Activated B cell treated with CpG ODN at 0.5 μM for 24 hours (primary cell): ENCODE measurements at regions of chr6 and their contacts with region 1.

Region 1: GRCh38 chr6:32933636-32934085 is 7.2 kb downstream of the HLA-DMB start:
- DNase-seq: peak; percentile 60
- ATAC-seq: peak; percentile 54
- H3K4me3 Mint-ChIP-seq: no peak overlapping the region
- H3K27ac Mint-ChIP-seq: peak overlapping the region; percentile 79
- H3K4me1 Mint-ChIP-seq: peaks cover 92% of the 10 kb centered on the region
- H3K27me3 Mint-ChIP-seq: no peaks in the 10 kb centered on the region
- CTCF ChIP-seq: peak; percentile 65

Region 2: DNA sequence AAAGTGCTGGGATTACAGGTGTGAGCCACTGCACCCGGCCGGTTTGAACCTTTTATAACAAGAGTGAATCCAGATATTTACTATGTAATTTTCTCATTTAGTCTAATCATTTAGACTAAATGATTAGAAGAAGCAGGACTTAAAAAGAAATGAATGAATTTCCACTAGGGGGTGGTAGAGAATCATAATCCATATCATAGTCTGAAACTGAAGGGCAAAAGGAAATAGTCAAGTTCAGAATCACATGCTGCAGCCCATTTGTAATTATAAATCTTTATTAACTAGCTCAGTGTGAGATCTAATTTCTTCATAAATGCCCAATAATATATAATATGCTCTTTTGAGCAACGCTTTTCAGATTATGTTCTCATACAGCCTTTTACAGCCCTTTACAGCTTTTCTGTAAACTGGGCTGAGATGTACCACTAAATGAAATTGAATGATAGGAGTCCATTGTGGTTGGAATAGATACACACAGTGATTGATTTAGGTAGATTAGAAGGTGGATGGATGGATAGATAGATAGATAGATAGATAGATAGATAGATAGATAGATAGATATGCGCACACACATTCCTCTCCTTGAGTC is 47.9 kb before region 1 on chr6:
- CTCF ChIA-PET with region 1: interaction called, 33 read pairs
- POLR2A ChIA-PET with region 1: interaction called, 9 read pairs
- intact Hi-C with region 1: no loop called
- DNase-seq: no peak
- ATAC-seq: peak; percentile 68
- H3K4me3 Mint-ChIP-seq: no peak overlapping the region
- H3K27ac Mint-ChIP-seq: no peak overlapping the region
- H3K4me1 Mint-ChIP-seq: peaks cover 27% of the 10 kb centered on the region
- H3K27me3 Mint-ChIP-seq: no peaks in the 10 kb centered on the region
- CTCF ChIP-seq: no peak

Region 3: DNA sequence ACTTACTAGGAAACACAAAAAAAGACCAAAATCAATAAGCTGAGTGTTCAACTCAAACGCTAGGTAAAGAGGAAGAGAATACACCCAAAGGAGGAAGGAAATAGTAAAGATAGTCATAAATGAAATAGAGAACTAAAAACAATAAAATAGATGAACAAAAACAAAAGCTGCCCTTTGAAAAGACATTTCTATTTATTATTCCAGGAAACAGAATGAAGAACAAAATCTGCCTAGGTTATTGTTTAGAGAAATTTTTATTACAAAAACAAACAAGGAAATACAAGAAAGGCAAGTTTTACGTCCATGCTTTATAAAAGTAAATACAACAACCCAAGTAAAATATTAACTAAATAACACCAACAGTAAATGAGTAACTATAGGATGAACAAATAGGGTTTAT is 12.9 kb before region 1 on chr6:
- CTCF ChIA-PET with region 1: interaction called, 27 read pairs
- POLR2A ChIA-PET with region 1: interaction called, 37 read pairs
- intact Hi-C with region 1: loop called (anchors 2 kb)
- DNase-seq: no peak
- ATAC-seq: peak; percentile 40
- H3K4me3 Mint-ChIP-seq: peak overlapping the region; percentile 67
- H3K27ac Mint-ChIP-seq: peak overlapping the region; percentile 81
- H3K4me1 Mint-ChIP-seq: peaks cover 73% of the 10 kb centered on the region
- H3K27me3 Mint-ChIP-seq: no peaks in the 10 kb centered on the region
- CTCF ChIP-seq: no peak

Region 4: DNA sequence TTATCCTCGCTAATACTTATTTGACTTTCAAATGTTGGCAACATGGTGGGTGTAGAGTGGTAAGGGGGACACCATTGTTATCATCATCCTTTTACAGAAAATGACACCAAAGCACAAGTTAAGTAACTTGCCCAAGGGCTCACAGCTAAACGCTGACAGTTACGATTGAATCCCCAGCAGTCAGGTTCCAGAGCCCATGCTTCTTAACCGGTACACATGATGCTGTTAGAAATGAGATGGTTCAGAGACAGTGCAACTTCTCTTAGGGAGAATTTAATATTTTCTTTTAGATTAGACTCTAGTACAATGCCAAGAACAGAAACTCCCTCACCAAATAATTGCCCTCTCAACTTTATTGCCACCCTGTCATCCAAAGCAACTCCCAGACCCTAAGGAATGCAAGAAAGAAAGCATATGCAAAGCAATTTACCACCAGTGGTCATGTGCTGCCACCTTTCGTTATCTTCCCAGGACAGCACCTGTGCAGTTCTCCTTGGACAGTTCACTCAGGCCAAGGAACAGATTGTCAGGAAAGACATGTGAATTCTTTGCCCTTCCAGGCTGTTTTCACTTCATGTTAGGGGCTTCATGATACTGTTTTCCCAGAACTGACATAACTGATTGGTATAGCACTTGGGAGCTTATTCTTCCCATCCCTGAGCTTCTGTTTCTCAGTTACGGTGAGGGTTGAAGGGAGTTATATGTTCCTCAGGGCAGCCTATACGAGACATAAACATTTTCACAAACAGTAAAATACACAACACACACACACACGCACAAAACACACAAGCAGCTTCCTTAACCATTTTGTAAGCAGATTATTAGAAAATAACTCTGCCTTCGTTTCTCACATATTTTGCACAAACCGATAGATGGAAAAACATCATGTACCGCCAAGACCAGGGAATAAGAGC is 14.1 kb after region 1 on chr6:
- CTCF ChIA-PET with region 1: interaction called, 99 read pairs
- POLR2A ChIA-PET with region 1: interaction called, 594 read pairs
- intact Hi-C with region 1: loop called (anchors 1 kb)
- DNase-seq: no peak
- ATAC-seq: no peak
- H3K4me3 Mint-ChIP-seq: peak overlapping the region; percentile 98
- H3K27ac Mint-ChIP-seq: peak overlapping the region; percentile 99
- H3K4me1 Mint-ChIP-seq: peaks cover 94% of the 10 kb centered on the region
- H3K27me3 Mint-ChIP-seq: no peaks in the 10 kb centered on the region
- CTCF ChIP-seq: no peak

Region 5: DNA sequence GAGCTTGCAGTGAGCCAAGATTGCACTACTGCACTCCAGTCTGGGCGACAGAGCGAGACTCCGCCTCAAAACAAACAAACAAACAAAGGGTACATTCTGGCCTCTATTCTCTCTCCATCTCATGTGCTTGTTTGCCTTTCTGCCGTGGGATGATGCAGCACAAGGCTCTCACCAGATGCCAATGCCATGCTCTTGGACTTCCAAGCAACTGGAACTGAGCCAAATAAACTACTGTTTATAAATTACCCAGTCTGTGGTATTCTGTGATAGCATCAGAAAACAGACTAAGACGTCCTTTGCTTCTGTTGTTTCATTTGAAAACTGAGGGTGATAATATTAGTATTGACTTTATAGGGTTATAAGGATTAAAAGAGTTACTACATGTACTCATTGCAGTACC is 31.1 kb after region 1 on chr6:
- CTCF ChIA-PET with region 1: interaction called, 151 read pairs
- POLR2A ChIA-PET with region 1: interaction called, 1,150 read pairs
- intact Hi-C with region 1: loop called (anchors 1 kb)
- DNase-seq: no peak
- ATAC-seq: no peak
- H3K4me3 Mint-ChIP-seq: no peak overlapping the region
- H3K27ac Mint-ChIP-seq: no peak overlapping the region
- H3K4me1 Mint-ChIP-seq: peaks cover 50% of the 10 kb centered on the region
- H3K27me3 Mint-ChIP-seq: no peaks in the 10 kb centered on the region
- CTCF ChIP-seq: no peak